Naive thymus-derived CD4-positive, alpha-beta T cell (primary cell): ENCODE measurements at regions of chr16 and their contacts with region 1.

Region 1: DNA sequence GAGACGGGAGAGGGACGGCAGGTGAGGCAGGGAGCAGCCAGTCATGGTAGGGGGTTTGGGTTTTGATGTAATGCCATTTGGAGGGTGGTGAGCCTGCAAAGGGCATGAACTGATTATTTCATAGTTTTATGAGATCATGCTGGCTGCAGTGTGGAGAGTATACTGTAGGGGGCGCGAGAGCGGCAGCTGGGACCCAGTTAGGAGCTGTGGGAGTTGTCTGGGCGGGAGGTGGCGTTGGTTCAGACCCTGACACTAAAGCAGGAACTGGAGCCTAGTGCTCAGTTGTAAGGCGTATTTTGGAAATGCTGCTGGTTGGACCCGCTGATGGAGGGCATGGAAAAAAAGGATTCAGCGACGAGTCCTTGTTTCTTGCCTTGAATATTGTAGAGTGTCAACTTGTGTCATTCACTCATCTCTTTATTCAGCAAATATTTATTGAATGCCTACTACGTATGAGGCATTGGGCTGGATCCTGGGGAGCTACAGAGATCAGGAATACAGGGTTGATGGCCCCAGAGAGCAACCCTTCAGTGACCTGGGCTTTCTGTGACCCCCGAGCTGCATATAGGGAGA is 23.7 kb upstream of the KDM8 start:
- DNase-seq: peak; percentile 70 to 91 (median 84)
- ATAC-seq: peak; percentile 100
- H3K4me3 ChIP-seq: no peak overlapping the region
- H3K4me3 Mint-ChIP-seq: peak overlapping the region in 9 of 10 donors; percentile 5 to 56 (median 46)
- H3K27ac ChIP-seq: peak overlapping the region; percentile 19
- H3K27ac Mint-ChIP-seq: peak overlapping the region; percentile 51 to 95 (median 86)
- H3K4me1 ChIP-seq: peaks cover 17 to 34% of the 10 kb centered on the region in 2 donors
- H3K4me1 Mint-ChIP-seq: peaks cover 20 to 62% (median 48%) of the 10 kb centered on the region in 7 donors
- H3K27me3 ChIP-seq: no peaks in the 10 kb centered on the region
- H3K27me3 Mint-ChIP-seq: peaks cover 0 to 13% (median 0%) of the 10 kb centered on the region in 5 donors

Region 2: DNA sequence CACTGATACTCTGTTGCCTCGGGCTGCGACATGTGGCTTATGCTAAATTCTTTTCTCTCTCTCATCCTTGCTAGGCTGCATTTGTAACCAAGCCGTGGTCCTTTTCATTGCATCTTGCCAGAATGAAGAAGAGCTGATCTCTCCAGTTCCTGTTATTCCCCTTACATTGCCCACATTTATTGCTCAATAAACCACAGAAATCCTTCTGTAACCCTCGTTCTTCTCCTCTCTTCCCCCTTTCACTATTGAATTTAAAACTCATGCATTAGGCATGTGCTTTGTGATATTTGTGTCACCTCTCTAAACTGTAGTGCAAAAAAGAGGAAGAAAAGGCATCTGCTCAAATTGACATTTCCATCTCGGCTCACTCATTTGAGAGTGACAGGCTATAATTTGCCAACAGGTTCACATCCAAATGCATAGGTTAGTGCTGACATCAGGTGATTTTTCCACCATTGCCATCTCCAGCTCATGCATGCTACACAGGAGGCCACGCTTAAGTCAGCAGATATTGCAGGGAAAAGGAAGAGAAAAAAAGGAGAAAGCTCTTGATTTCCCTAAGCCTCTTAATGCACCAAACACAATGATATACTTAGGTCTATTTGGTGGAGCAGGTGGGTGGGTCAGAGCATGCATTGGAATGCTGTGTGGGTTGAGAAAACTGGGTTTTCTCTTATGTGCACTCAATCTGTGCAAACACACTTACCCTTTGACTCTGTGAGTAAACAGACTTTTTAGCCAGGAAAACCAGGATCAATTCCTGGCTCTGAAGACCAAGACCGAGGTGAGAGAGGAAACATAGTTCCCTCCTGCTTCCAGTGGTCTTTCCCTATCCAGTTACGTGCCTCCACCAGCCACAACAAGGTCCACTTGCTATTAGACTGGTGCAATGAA is 845.1 kb before region 1 on chr16:
- CTCF ChIA-PET with region 1: no interaction called
- POLR2A ChIA-PET with region 1: no interaction called
- intact Hi-C with region 1: no loop called
- DNase-seq: no peak
- ATAC-seq: no peak
- H3K4me3 ChIP-seq: no peak overlapping the region
- H3K4me3 Mint-ChIP-seq: no peak overlapping the region
- H3K27ac ChIP-seq: no peak overlapping the region
- H3K27ac Mint-ChIP-seq: no peak overlapping the region
- H3K4me1 ChIP-seq: no peaks in the 10 kb centered on the region
- H3K4me1 Mint-ChIP-seq: peaks cover 0 to 9% (median 0%) of the 10 kb centered on the region in 7 donors
- H3K27me3 ChIP-seq: no peaks in the 10 kb centered on the region
- H3K27me3 Mint-ChIP-seq: peaks cover 3 to 24% (median 13%) of the 10 kb centered on the region in 5 donors

Region 3: DNA sequence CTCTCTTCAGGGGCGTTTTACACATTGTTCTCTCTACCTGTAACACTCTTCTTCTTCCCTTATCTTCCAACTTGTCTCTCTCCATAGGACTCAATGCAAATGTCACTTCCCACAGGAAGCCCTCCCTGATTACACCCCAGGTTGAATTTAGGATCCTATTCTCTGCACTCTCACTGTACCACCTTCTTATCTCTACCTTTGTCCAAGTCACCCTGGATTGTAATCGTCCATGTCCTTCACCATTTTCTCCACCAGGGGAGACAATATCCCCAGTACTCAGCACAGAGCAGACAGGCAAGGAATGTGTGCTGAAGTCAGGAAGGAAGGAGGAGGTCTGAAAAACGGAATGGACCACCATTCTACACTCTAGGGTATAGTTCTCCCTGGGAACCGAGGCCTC is 98.7 kb before region 1 on chr16:
- CTCF ChIA-PET with region 1: no interaction called
- POLR2A ChIA-PET with region 1: no interaction called
- intact Hi-C with region 1: no loop called
- DNase-seq: peak in 2 of 9 donors; percentile 4
- ATAC-seq: no peak
- H3K4me3 ChIP-seq: no peak overlapping the region
- H3K4me3 Mint-ChIP-seq: no peak overlapping the region
- H3K27ac ChIP-seq: no peak overlapping the region
- H3K27ac Mint-ChIP-seq: no peak overlapping the region
- H3K4me1 ChIP-seq: no peaks in the 10 kb centered on the region
- H3K4me1 Mint-ChIP-seq: peaks cover 0 to 6% (median 0%) of the 10 kb centered on the region in 7 donors
- H3K27me3 ChIP-seq: peaks cover 0 to 3% of the 10 kb centered on the region in 2 donors
- H3K27me3 Mint-ChIP-seq: peaks cover 7 to 66% (median 35%) of the 10 kb centered on the region in 5 donors

Region 4: DNA sequence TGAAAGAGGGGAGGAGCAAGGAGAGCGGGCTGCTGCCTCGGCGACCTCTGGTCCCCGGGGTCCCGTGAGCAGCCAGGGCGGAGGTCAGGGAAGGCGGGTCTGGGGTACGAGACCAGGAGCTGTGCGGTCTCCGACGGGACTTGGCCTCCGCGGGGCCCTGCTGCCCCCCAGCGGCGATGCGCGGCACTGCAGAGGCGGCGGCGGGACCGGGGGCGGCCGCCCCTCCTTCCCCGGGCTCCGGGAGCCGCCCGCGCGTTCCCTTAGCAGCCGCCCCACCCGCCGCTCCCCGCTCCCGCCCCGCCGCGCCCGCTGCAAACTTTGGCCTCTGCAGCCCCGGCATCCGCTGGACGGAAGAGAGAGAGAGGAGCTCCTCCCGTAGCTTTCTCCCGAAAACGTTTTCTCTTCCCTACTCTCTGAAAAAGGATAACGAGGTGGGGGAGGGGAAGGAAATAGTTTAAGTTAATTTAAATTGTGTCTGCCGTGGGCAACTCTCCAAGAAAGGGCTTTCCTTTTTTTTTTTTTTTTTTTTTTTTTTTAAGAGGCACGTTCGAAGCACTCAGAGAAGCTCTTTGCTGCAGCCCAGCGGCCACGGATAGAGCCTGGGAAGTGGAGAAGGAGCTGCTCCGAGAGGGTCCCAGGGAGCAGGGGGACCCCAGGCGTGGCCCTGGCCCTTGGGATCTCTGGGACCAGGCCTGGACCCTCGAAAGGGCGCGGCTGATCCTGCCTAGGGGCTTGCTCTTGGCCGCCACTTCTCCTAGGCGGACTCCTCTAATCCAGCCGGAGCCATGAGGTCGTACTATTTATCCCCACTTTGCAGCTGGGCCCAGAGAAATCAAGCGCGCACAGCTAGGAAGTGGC is 69.7 kb before region 1 on chr16:
- CTCF ChIA-PET with region 1: no interaction called
- POLR2A ChIA-PET with region 1: no interaction called
- intact Hi-C with region 1: no loop called
- DNase-seq: peak; percentile 55 to 93 (median 80)
- ATAC-seq: peak; percentile 94
- H3K4me3 ChIP-seq: peak overlapping the region; percentile 54
- H3K4me3 Mint-ChIP-seq: peak overlapping the region; percentile 54 to 84 (median 70)
- H3K27ac ChIP-seq: no peak overlapping the region
- H3K27ac Mint-ChIP-seq: peak overlapping the region in 3 of 9 donors; percentile 12 to 25 (median 20)
- H3K4me1 ChIP-seq: peaks cover 6 to 9% of the 10 kb centered on the region in 2 donors
- H3K4me1 Mint-ChIP-seq: peaks cover 0 to 13% (median 6%) of the 10 kb centered on the region in 7 donors
- H3K27me3 ChIP-seq: no peaks in the 10 kb centered on the region
- H3K27me3 Mint-ChIP-seq: peaks cover 0 to 5% (median 0%) of the 10 kb centered on the region in 5 donors

Region 5: DNA sequence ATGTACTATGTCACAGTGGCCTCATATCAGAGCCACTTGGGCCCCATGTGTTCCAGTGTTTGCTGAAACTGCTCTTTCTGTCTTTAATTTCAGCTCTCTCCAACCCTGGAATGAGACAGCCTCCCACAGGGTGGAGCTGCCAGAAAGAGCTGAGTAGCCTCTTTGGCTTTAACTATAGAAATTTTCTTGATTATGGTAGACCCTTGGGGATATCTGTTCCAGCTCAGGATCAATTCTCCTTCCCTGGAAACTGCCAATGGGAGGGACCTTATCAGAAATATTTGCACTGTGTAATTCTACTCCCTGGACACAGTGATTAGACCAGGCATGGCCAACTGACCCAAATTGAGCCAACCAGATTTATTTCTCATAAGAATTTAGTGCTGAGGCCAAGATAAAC is 15.2 kb before region 1 on chr16:
- CTCF ChIA-PET with region 1: interaction called, 18 read pairs
- POLR2A ChIA-PET with region 1: interaction called, 9 read pairs
- intact Hi-C with region 1: no loop called
- DNase-seq: no peak
- ATAC-seq: no peak
- H3K4me3 ChIP-seq: no peak overlapping the region
- H3K4me3 Mint-ChIP-seq: no peak overlapping the region
- H3K27ac ChIP-seq: no peak overlapping the region
- H3K27ac Mint-ChIP-seq: peak overlapping the region in 2 of 9 donors; percentile 30 to 41
- H3K4me1 ChIP-seq: peaks cover 7 to 13% of the 10 kb centered on the region in 2 donors
- H3K4me1 Mint-ChIP-seq: peaks cover 16 to 28% (median 23%) of the 10 kb centered on the region in 7 donors
- H3K27me3 ChIP-seq: no peaks in the 10 kb centered on the region
- H3K27me3 Mint-ChIP-seq: peaks cover 0 to 3% (median 0%) of the 10 kb centered on the region in 5 donors

Region 6: DNA sequence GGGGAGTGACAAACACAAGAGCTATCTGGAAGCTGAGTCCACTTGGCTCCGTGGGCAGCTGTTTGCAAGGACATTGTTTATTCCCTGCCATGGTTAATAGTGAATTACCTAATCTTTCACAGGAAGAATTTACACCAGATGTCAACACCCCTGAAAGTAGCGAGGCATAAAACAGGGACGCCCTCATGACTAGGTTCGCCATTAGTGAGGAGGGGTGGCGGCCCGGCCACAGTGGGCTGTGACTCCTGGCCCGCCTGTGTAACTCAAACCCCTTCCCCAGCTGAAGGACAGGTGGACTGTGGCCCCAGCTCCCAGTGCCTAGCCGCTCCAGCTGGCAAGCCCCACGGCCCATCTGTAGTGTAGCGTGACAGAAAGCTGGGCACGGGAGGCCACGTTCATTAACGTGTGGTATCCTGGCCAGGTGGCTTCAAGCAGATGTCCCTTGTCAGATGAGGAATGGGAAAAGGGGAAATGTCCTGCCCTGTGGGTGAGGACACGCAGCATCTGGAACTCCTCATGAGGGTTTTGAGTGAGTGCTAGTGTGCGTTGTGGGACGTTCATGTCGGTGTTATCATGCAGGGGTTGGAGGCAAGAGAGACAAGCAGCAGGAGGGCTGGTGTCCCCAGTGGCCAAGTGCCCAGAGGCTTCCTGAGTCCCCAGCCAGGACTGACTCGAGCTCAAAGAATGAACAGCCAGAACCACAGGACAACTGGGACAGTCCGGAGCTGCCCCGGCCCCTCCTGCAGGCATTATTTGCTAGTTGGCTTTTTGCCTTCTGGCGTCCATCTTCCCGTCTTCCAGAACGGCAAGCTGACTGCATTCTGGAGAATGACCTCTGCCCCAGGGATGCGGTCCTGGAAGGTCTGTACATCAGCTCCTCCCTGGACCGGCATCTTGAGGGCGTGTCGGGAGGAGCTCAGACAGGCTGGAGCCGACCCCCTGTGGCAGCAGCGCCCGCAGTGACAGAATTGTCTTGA is 43.0 kb after region 1 on chr16:
- CTCF ChIA-PET with region 1: interaction called, 48 read pairs
- POLR2A ChIA-PET with region 1: interaction called, 95 read pairs
- intact Hi-C with region 1: no loop called
- DNase-seq: no peak
- ATAC-seq: no peak
- H3K4me3 ChIP-seq: no peak overlapping the region
- H3K4me3 Mint-ChIP-seq: no peak overlapping the region
- H3K27ac ChIP-seq: no peak overlapping the region
- H3K27ac Mint-ChIP-seq: peak overlapping the region in 6 of 9 donors; percentile 76 to 91 (median 78)
- H3K4me1 ChIP-seq: no peaks in the 10 kb centered on the region
- H3K4me1 Mint-ChIP-seq: peaks cover 10 to 32% (median 23%) of the 10 kb centered on the region in 7 donors
- H3K27me3 ChIP-seq: no peaks in the 10 kb centered on the region
- H3K27me3 Mint-ChIP-seq: no peaks in the 10 kb centered on the region

Region 7: DNA sequence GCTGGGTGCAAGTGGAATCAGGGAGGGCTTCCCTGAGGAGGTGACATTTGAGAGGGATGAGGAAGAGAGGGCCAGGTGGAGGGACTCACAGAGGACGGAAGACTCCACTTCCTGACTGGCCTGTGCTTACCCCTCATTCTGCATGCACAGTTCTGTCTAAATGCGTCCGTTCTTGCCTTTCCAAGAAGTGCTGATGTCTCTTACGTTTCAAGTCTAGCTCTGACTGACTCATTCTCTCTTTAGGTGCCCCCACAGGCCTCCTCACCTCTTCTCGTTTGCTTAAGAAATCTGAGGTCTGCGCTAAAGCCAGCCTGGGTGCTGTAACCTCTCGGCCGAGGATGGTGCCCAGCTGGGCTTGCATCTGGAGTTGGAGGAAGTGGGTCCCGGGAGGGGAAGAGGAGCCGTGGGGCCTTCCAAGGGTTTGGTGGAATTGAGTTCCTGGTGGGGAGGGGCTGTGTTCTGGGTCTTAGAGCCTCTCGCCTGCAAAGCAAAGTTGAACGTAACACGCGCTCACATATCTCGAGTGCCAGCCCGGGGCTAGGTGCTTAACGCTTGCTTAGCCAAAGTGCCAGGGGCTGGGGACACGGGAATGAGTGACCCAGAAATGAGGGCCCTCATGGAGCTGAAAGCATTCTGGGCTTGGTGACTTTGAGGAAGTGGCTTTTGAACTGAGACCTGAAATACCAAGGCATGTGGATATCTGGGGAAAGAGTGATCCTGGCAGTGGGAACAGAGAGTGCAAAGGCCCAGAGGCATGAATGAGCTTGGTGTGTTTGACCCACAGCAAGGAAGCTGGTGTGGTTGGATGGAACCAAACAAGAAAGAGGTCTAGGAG is 139.0 kb after region 1 on chr16:
- CTCF ChIA-PET with region 1: interaction called, 7 read pairs
- POLR2A ChIA-PET with region 1: interaction called, 10 read pairs
- intact Hi-C with region 1: loop called (anchors 1 kb)
- DNase-seq: peak; percentile 22 to 77 (median 52)
- ATAC-seq: peak; percentile 61
- H3K4me3 ChIP-seq: peak overlapping the region; percentile 63
- H3K4me3 Mint-ChIP-seq: peak overlapping the region; percentile 85 to 99 (median 97)
- H3K27ac ChIP-seq: peak overlapping the region; percentile 99
- H3K27ac Mint-ChIP-seq: peak overlapping the region; percentile 92 to 99 (median 95)
- H3K4me1 ChIP-seq: peaks cover 37 to 43% of the 10 kb centered on the region in 2 donors
- H3K4me1 Mint-ChIP-seq: peaks cover 67 to 85% (median 75%) of the 10 kb centered on the region in 7 donors
- H3K27me3 ChIP-seq: no peaks in the 10 kb centered on the region
- H3K27me3 Mint-ChIP-seq: no peaks in the 10 kb centered on the region

Region 8: DNA sequence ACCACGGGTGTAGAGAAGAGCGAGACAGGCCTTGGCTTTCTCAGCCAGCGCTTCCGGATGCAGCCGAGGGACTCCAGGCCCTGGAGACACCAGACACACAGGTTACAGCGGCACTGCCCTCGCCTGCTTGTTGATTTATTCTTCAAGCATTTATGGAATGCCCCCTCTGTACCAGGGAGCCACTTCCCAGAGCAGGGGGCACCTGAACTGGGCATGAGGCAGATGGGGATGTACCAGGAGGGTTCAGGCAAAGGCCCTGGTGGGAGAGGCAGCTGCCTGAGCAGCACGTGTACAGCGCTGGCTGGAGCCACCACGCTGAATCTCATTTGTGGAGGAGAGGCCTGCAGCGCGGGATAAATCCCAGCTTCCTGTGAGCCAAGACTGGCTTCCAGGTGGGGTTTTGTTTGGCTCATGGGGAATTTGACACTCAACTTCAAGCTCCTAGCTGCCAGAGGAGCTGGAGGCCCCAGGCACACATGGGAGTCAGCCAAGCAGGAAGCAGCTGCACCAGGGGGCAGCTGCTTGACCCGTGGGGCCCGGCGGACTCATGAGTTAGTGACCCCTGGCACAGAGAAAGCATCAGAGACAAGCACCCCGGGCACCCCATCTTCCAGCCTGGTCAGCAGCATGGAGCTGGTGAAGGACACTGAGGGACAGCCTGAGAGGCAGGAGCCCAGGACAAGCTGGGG is 282.0 kb after region 1 on chr16:
- CTCF ChIA-PET with region 1: interaction called, 3 read pairs
- POLR2A ChIA-PET with region 1: no interaction called
- intact Hi-C with region 1: loop called (anchors 1 kb)
- DNase-seq: no peak
- ATAC-seq: no peak
- H3K4me3 ChIP-seq: no peak overlapping the region
- H3K4me3 Mint-ChIP-seq: no peak overlapping the region
- H3K27ac ChIP-seq: no peak overlapping the region
- H3K27ac Mint-ChIP-seq: peak overlapping the region in 8 of 9 donors; percentile 16 to 64 (median 44)
- H3K4me1 ChIP-seq: peaks cover 40 to 60% of the 10 kb centered on the region in 2 donors
- H3K4me1 Mint-ChIP-seq: peaks cover 24 to 75% (median 39%) of the 10 kb centered on the region in 7 donors
- H3K27me3 ChIP-seq: no peaks in the 10 kb centered on the region
- H3K27me3 Mint-ChIP-seq: no peaks in the 10 kb centered on the region

Region 9: GRCh38 chr16:28181515-28181914 is 1001.9 kb after region 1 on chr16:
- CTCF ChIA-PET with region 1: no interaction called
- POLR2A ChIA-PET with region 1: no interaction called
- intact Hi-C with region 1: no loop called
- DNase-seq: no peak
- ATAC-seq: no peak
- H3K4me3 ChIP-seq: no peak overlapping the region
- H3K4me3 Mint-ChIP-seq: peak overlapping the region; percentile 21 to 77 (median 66)
- H3K27ac ChIP-seq: peak overlapping the region; percentile 59
- H3K27ac Mint-ChIP-seq: peak overlapping the region; percentile 62 to 96 (median 89)
- H3K4me1 ChIP-seq: peaks cover 38 to 58% of the 10 kb centered on the region in 2 donors
- H3K4me1 Mint-ChIP-seq: peaks cover 66 to 97% (median 86%) of the 10 kb centered on the region in 7 donors
- H3K27me3 ChIP-seq: no peaks in the 10 kb centered on the region
- H3K27me3 Mint-ChIP-seq: no peaks in the 10 kb centered on the region